CD14-positive monocyte (primary cell): ENCODE measurements at regions of chr2 and their contacts with region 1.

Region 1: GRCh38 chr2:43576981-43577892 is 18.6 kb downstream of the THADA start:
- DNase-seq: peak; percentile 28 to 47 (median 46)
- H3K4me3 ChIP-seq: no peak overlapping the region
- H3K4me3 Mint-ChIP-seq: no peak overlapping the region
- H3K27ac ChIP-seq: no peak overlapping the region
- H3K27ac Mint-ChIP-seq: peak overlapping the region in 1 of 7 donors; percentile 30
- H3K4me1 ChIP-seq: no peaks in the 10 kb centered on the region
- H3K4me1 Mint-ChIP-seq: no peaks in the 10 kb centered on the region
- H3K27me3 ChIP-seq: no peaks in the 10 kb centered on the region
- H3K27me3 Mint-ChIP-seq: no peaks in the 10 kb centered on the region
- CTCF ChIP-seq: peak; percentile 87

Region 2: DNA sequence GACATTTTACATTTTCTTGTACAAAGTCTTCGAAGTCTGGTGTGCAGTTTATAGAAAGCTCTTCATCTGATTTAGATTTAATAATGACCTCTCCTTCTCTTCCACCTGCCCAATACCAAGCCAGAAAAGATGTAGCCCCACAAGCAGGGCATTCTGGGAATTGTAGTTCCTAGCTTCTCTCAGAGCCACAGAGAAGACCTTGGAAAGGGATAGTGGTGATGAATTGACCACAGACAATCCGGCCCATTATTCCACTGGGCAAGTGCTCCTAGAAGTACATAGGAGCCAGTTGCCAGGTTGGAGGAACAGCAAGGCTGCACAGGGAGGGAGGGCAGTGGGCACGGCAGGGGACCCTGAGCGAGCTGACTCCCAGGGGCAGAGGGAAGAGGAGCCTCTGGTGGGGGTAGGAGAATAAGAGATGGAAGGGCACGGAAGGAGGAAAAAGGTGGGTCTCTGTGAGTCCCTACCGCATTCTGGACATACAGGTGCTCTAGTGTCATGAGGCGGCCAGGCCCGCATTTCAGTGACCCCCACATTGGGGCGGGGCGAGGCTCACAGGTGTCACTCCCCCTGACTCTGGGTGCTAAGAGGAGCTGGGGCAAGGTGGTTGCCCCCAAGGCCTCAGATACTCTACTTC is 632.3 kb before region 1 on chr2:
- intact Hi-C with region 1: loop called in 1 of 2 experiments (anchors 5 kb)
- DNase-seq: no peak
- H3K4me3 ChIP-seq: no peak overlapping the region
- H3K4me3 Mint-ChIP-seq: no peak overlapping the region
- H3K27ac ChIP-seq: no peak overlapping the region
- H3K27ac Mint-ChIP-seq: peak overlapping the region in 1 of 7 donors; percentile 35
- H3K4me1 ChIP-seq: peaks cover 22 to 30% of the 10 kb centered on the region in 2 donors
- H3K4me1 Mint-ChIP-seq: peaks cover 38% of the 10 kb centered on the region
- H3K27me3 ChIP-seq: no peaks in the 10 kb centered on the region
- H3K27me3 Mint-ChIP-seq: peaks cover 0 to 3% (median 1%) of the 10 kb centered on the region in 3 donors
- CTCF ChIP-seq: no peak